Activated B cell treated with CpG ODN at 0.5 μM for 24 hours (primary cell): ENCODE measurements at regions of chr4 and their contacts with region 1.

Region 1: GRCh38 chr4:99405433-99406115 is 29.6 kb downstream of the ADH7 start:
- DNase-seq: no peak
- ATAC-seq: peak; percentile 69
- H3K4me3 Mint-ChIP-seq: no peak overlapping the region
- H3K27ac Mint-ChIP-seq: no peak overlapping the region
- H3K4me1 Mint-ChIP-seq: peaks cover 7% of the 10 kb centered on the region
- H3K27me3 Mint-ChIP-seq: peaks cover 1% of the 10 kb centered on the region
- CTCF ChIP-seq: no peak

Region 2: DNA sequence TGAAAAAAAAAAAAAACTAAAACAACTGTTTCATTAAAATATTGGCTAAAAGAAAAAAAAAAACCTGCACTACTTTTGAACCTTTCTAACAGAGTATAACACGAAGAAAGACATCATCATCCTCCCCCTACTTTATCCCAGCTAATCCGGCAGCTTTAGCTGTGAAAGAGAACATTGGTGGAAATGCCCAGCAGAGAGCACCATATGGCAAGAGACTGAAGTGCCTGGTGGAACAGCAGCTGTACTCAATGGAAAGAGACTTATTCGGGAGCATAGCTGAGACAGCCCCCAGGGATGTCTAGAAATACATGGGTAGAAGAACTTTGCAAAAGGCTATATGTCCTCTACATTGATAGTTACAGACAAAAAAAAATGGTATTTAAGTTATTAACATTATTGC is 1292.6 kb before region 1 on chr4:
- CTCF ChIA-PET with region 1: no interaction called
- POLR2A ChIA-PET with region 1: no interaction called
- intact Hi-C with region 1: loop called (anchors 10 kb)
- DNase-seq: no peak
- ATAC-seq: no peak
- H3K4me3 Mint-ChIP-seq: no peak overlapping the region
- H3K27ac Mint-ChIP-seq: no peak overlapping the region
- H3K4me1 Mint-ChIP-seq: no peaks in the 10 kb centered on the region
- H3K27me3 Mint-ChIP-seq: no peaks in the 10 kb centered on the region
- CTCF ChIP-seq: no peak

Region 3: DNA sequence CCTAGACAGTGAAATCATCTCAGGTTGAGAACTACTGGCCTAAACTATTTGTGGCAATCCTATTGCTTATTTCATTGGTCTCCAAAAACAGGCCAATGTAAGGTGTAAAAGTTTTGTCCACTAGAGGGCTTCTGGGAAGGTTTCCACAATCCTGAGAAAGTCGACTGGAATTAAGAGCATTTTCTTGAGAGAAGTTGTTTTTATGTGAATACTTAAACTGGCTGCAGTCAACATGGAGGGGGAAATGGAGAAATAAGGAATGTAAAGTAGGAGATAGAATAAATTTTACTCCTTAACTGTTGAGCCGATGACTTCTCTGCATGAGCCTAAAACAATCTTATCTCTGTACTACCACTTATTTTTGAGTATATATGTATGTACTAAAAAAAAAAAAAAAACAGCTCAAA is 465.7 kb before region 1 on chr4:
- CTCF ChIA-PET with region 1: no interaction called
- POLR2A ChIA-PET with region 1: no interaction called
- intact Hi-C with region 1: loop called (anchors 1 kb)
- DNase-seq: no peak
- ATAC-seq: peak; percentile 34
- H3K4me3 Mint-ChIP-seq: no peak overlapping the region
- H3K27ac Mint-ChIP-seq: no peak overlapping the region
- H3K4me1 Mint-ChIP-seq: peaks cover 8% of the 10 kb centered on the region
- H3K27me3 Mint-ChIP-seq: no peaks in the 10 kb centered on the region
- CTCF ChIP-seq: peak; percentile 34

Region 4: DNA sequence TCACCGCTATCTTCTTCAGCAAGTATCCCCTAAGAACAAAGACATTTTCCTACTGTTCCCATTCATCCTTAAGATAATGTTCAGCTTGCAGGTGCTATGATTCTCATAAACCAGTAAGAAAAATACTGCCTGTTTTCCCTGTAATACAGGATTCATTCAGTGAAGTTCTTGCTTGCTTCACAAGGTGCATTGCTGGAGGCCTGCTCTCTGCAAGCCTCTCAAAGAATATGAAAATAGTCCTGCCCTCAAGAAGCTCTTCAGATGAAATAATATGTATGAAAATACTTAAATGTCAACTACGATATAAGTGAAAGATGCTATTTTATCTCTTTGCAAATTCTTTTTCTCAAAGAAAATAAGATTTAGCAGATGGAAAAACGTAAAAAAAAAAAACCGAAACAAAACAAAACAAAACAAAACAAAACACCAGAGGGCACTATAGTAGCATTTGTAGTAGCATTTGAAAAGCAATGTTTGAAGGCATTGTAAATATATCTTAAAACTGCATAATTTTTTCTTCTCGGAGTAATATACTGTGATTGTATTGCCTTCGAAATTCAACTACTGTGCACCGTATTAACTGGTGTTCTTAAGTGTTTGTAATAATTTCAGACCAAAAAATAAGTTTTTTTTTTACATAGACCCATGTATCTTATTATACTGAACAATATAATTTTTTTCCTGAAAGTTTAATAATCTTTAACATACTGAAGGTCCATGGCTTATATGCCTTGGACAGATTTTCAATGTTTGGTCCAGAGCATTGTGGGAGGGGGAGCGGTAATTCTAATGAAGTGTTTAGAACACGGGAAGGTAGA is 287.5 kb before region 1 on chr4:
- CTCF ChIA-PET with region 1: interaction called, 4 read pairs
- POLR2A ChIA-PET with region 1: no interaction called
- intact Hi-C with region 1: loop called (anchors 1 kb)
- DNase-seq: no peak
- ATAC-seq: no peak
- H3K4me3 Mint-ChIP-seq: no peak overlapping the region
- H3K27ac Mint-ChIP-seq: no peak overlapping the region
- H3K4me1 Mint-ChIP-seq: no peaks in the 10 kb centered on the region
- H3K27me3 Mint-ChIP-seq: peaks cover 2% of the 10 kb centered on the region
- CTCF ChIP-seq: no peak